ENCODE measurements at regions of chr13 and their contacts with region 1.

Region 1: GRCh38 chr13:36981156-36981743 is 17.9 kb downstream of the ALG5 start:
- DNase-seq: no peak
- H3K4me3 ChIP-seq: no peak overlapping the region
- H3K27ac ChIP-seq: no peak overlapping the region
- H3K4me1 ChIP-seq: no peaks in the 10 kb centered on the region
- H3K27me3 ChIP-seq: no peaks in the 10 kb centered on the region
- CTCF ChIP-seq: peak; percentile 55 to 64 (median 63)
- EP300 ChIP-seq: no peak
- POLR2A ChIP-seq: no peak

Region 2: DNA sequence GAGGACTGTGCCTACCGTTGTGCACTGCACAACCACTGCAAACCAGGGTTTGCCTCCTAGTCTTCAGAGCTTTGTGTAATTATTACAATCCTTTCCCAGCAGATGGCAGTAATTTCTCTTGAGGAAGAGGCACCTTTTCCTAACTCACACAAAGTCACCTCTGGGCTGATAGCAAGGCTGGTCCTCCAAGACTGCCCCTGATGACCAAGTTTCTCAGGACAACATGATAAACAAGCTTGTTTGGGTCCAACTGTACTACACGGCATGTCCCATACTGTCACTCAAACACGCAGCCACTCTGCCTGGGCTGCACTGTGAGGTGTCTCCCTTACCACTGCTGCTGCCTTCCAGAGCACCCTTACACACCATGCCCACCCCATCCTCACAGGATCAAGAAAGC is 123.0 kb before region 1 on chr13:
- intact Hi-C with region 1: loop called (anchors 2 kb)
- DNase-seq: no peak
- H3K4me3 ChIP-seq: no peak overlapping the region
- H3K27ac ChIP-seq: no peak overlapping the region
- H3K4me1 ChIP-seq: peaks cover 0 to 12% (median 8%) of the 10 kb centered on the region in 4 donors
- H3K27me3 ChIP-seq: no peaks in the 10 kb centered on the region
- CTCF ChIP-seq: peak; percentile 48 to 57 (median 51)
- EP300 ChIP-seq: no peak
- POLR2A ChIP-seq: no peak

Region 3: DNA sequence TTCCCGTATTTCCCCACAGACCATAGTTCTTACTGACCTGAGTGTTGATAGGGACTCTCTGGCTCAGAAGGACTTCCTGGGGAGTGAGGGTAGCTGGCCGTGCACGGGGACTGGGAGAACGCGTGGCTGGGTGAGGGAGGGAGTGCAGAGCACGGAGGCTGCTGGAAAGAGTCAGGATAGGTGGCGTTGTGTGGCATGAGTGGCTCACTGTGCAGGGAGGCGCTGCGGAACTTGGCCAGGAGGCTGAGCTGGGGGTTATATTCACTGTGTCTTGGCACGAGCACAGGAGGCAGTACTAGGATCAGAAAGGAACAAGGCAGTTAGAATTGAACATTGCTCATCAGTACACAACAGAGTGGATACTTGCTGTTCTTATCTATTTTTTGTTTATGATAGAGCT is 108.6 kb before region 1 on chr13:
- intact Hi-C with region 1: no loop called
- DNase-seq: peak; percentile 83
- H3K4me3 ChIP-seq: no peak overlapping the region
- H3K27ac ChIP-seq: no peak overlapping the region
- H3K4me1 ChIP-seq: peaks cover 0 to 16% (median 3%) of the 10 kb centered on the region in 4 donors
- H3K27me3 ChIP-seq: no peaks in the 10 kb centered on the region
- CTCF ChIP-seq: no peak
- EP300 ChIP-seq: no peak
- POLR2A ChIP-seq: no peak